Left cardiac atrium (tissue), 4 donors: ENCODE measurements at regions of chr2 and their contacts with region 1.

Region 1: DNA sequence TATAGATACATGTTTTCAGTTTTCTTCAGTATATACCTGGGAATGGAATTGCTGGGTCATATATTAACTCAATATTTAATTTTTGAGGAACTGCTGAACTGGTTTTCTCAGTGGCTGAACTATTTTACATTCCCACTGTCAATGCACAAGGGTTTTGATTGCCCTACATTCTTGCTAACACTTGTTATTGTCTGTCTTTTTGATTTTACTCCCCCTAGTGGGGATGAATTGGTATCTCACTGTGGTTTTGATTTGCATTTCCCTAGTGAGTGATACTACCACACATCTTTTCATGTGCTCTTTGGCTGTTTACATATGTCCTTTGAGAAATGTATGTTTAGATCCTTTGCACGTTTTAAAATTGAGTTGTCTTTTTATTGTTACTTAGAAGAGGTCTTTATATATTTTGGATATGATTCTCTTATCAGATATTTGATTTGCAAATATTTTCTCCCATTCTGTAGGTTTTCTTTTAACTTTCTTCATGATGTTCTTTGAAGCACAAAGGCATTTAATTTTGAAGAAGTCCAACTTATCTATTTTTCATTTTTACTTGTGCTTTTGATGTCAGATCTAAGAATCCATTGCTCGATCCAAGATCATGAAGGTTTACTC is 36.2 kb downstream of the ASB1 start:
- DNase-seq: no peak
- ATAC-seq: peak in 1 of 2 donors; percentile 22

Region 2: GRCh38 chr2:238370823-238371372 is 92.0 kb before region 1 on chr2:
- intact Hi-C with region 1: loop called (anchors 1 to 5 kb)
- DNase-seq: peak; percentile 58
- ATAC-seq: peak; percentile 94 to 96

Region 3: GRCh38 chr2:238667008-238667407 is 204.1 kb after region 1 on chr2:
- intact Hi-C with region 1: no loop called
- DNase-seq: no peak
- ATAC-seq: no peak